ENCODE measurements at regions of chr15 and their contacts with region 1.

Region 1: DNA sequence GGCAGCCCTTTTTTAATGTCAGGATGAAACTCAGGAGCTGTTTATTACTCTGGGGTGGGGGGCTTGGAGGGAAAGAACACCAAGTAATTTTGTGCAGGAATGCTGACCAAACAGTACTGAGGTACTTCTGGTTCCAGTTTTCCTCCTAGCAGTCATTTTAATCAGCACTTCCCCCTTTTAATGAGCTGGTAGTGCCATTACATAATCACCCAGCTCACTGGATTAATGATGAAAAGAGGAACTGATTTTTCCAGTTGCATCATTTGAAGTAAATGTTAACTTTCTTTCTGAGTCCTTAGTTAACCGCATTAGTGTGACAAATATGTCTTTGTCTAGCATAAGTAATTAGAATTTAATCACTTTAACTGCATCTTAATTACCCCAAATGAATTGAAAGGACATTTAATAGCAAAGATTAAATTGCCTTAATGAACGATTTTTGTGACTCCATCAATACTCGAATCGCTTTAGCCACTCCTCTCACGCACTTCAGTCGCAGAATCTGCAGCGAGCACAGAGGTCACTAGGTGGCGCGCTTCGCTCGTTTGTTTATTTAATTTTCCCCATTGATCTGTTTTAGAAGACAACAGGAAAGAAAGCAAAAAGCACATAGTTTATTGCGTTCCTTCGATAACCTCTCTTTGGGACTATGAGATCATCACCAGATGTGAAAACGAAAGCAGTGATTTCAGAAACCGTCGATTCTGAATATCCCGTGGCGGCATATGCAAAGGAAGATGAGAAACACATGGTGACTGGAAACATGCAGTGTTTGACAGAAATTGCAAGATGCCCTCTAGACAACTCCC is 9.8 kb downstream of the ONECUT1 start:
- DNase-seq: peak; percentile 68
- H3K4me3 ChIP-seq: peak overlapping the region in 1 of 4 donors; percentile 24
- H3K27ac ChIP-seq: no peak overlapping the region
- H3K4me1 ChIP-seq: peaks cover 0 to 22% (median 13%) of the 10 kb centered on the region in 4 donors
- H3K27me3 ChIP-seq: peaks cover 90% of the 10 kb centered on the region
- CTCF ChIP-seq: peak; percentile 70 to 88 (median 76)
- EP300 ChIP-seq: no peak
- POLR2A ChIP-seq: no peak

Region 2: DNA sequence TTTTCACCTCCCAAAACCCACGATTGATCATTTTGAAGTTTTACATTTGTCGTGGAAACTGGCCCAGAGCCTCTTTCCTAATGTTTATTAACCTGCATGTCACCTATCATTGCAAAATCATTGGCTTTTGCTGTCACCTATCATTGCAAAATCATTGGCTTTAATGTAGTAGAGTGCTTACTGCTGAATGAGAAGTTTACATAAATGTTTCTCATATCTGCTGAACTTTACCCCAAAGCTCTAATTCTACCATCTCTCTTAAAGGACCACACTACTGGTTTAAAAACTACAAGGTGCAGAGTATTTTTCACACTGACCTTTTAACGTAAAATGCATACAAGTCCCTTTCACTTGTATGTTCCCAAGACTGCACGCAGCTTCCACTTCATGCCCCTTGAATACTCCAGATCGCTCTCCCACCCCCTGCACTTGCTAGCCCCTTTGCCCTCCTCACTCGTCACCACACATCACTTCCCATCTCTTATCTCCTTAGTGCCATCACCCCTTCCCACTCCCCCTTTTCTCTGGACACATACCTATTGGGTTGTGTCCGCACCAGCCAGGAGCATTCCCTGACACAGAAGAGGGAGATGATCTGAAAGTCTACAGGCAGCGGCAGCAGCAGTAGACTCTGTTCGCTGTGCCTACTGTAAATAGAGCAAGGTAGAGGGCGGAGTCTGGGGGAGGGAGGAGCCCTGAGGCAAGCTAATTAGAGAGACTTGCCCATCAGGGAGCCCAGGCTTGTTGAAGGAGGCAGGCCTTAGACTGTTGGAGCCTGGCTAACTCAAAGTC is 71.0 kb before region 1 on chr15:
- in situ Hi-C with region 1: no loop called
- intact Hi-C with region 1: loop called (anchors 2 kb)
- DNase-seq: peak; percentile 85
- H3K4me3 ChIP-seq: peak overlapping the region in 2 of 4 donors; percentile 1 to 27
- H3K27ac ChIP-seq: peak overlapping the region in 2 of 4 donors; percentile 34 to 52
- H3K4me1 ChIP-seq: peaks cover 0 to 8% (median 7%) of the 10 kb centered on the region in 4 donors
- H3K27me3 ChIP-seq: no peaks in the 10 kb centered on the region
- CTCF ChIP-seq: no peak
- EP300 ChIP-seq: no peak
- POLR2A ChIP-seq: peak; percentile 17

Region 3: DNA sequence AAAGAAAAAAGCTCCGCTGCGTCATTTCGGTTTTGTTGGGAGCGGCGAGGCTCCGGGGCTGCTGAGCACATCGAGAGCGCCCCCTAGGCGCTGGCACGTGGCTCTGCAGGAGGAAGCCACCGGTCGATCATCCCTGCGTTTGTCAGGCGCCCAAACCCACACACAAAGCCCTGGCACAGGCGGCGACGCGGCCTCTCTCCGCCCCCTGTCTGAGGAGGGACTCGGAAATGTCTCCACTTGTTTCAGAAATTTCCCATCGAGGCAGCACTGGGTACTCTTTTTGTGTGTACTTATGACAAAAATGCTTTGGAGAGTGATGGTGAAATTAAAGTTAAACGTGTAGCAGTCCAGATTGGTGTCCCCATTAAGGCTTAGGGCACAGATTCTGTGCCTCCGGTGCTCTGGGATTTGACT is 417.1 kb after region 1 on chr15:
- in situ Hi-C with region 1: loop called in 2 of 4 experiments (anchors 5 to 25 kb)
- intact Hi-C with region 1: no loop called
- DNase-seq: peak; percentile 58
- H3K4me3 ChIP-seq: no peak overlapping the region
- H3K27ac ChIP-seq: no peak overlapping the region
- H3K4me1 ChIP-seq: peaks cover 0 to 5% (median 0%) of the 10 kb centered on the region in 4 donors
- H3K27me3 ChIP-seq: peaks cover 15% of the 10 kb centered on the region
- CTCF ChIP-seq: peak; percentile 74 to 86 (median 80)
- EP300 ChIP-seq: no peak
- POLR2A ChIP-seq: no peak

Region 4: DNA sequence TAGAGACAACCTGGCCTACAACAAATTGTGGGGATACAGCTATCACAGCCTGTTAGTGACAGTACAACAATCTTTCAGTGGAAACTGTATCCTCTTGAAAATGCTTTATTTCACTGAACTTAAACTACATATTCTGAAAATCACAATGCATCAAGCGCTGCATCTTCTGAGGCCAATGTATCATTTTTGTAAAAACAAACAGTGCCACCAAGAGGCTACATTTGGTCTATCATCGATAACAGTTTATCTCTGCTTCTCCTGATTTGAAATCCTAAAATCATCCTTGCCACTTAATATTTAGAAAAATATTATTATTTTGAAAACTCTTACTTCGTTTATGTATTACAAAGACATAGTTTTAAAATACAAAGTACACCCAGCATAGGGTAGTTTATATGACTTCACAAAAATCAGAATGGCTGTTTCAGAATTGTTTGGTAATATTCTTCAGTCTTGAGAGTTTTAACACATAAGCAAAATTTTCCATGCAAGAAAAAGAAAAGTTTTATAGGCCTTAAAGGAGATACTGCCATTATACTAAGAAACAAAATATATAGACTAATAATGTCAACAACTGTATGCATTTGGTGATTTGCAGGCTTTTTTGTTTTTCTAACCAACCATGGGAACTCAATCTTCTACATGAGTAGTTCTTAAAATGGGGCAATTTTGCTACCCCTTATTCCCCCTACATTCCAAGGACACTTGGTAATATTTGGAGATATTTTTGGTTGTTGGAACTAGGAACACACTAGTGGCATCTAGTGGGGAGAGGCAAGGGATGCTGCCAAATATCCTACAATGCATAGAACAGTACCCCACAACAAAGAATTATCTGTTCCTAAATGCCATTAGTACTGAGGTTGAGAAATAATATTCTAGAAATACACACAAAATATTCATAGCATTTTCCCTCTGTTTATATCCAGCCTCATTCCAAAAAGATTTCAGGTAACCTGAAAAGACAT is 936.8 kb after region 1 on chr15:
- in situ Hi-C with region 1: loop called in 1 of 4 experiments (anchors 25 kb)
- intact Hi-C with region 1: no loop called
- DNase-seq: no peak
- H3K4me3 ChIP-seq: no peak overlapping the region
- H3K27ac ChIP-seq: no peak overlapping the region
- H3K4me1 ChIP-seq: no peaks in the 10 kb centered on the region
- H3K27me3 ChIP-seq: no peaks in the 10 kb centered on the region
- CTCF ChIP-seq: peak in 2 of 5 experiments; percentile 13 to 26
- EP300 ChIP-seq: no peak
- POLR2A ChIP-seq: no peak

Measured in transverse colon (tissue), 4 donors.